ENCODE measurements at regions of chr18 and their contacts with region 1.

Region 1: GRCh38 chr18:70442933-70443332 is 154.1 kb downstream of the SOCS6 start:
- DNase-seq: peak in 1 of 3 donors; percentile 18
- H3K4me3 ChIP-seq: peak overlapping the region in 1 of 7 experiments; percentile 25
- H3K27ac ChIP-seq: no peak overlapping the region
- H3K4me1 ChIP-seq: no peaks in the 10 kb centered on the region
- H3K27me3 ChIP-seq: no peaks in the 10 kb centered on the region

Region 2: GRCh38 chr18:70454704-70455322 is 11.9 kb after region 1 on chr18:
- CTCF ChIA-PET with region 1: interaction called, 12 read pairs
- POLR2A ChIA-PET with region 1: no interaction called
- DNase-seq: peak; percentile 60 to 82 (median 74)
- H3K4me3 ChIP-seq: no peak overlapping the region
- H3K27ac ChIP-seq: no peak overlapping the region
- H3K4me1 ChIP-seq: peaks cover 0 to 8% (median 0%) of the 10 kb centered on the region in 4 experiments
- H3K27me3 ChIP-seq: no peaks in the 10 kb centered on the region

Measured in common myeloid progenitor, CD34-positive (primary cell).